Activated T-helper 2 cell treated with anti-CD3 and anti-CD28 coated beads, Interferon-gamma antibody, Interleukin-2, Interleukin-4, amounts not matched to agents 10 μg/mL and 5 μg/mL and 100 μg/mL, durations not matched to agents 14 hours and 24 hours and 36 hours (primary cell): ENCODE measurements at regions of chr2 and their contacts with region 1.

Region 1: GRCh38 chr2:197145471-197146138 is 165.0 kb downstream of the ANKRD44 start:
- DNase-seq: no peak
- H3K4me3 Mint-ChIP-seq: no peak overlapping the region
- H3K27ac Mint-ChIP-seq: peak overlapping the region; percentile 80
- H3K4me1 Mint-ChIP-seq: peaks cover 58% of the 10 kb centered on the region
- H3K27me3 Mint-ChIP-seq: no peaks in the 10 kb centered on the region

Region 2: DNA sequence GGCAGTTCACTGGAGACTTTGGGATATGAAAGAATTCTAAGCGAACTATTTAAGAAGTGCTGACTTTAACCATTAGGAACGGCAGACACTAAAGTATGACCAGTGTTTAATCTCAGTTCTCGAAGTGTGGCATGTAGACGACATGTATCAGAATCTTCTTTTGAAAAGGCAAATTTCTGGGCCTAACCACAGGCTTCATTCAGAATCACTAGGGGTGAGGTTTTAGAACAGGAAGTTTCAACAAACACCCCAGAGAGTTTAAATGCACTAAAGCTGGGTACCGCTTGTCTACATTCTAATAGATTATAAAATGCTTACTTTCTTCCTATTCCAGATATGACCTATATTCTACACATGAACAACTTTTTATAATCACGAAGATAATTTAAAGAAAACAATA is 15.3 kb before region 1 on chr2:
- intact Hi-C with region 1: loop called (anchors 2 kb)
- DNase-seq: no peak
- H3K4me3 Mint-ChIP-seq: peak overlapping the region; percentile 11
- H3K27ac Mint-ChIP-seq: peak overlapping the region; percentile 86
- H3K4me1 Mint-ChIP-seq: peaks cover 63% of the 10 kb centered on the region
- H3K27me3 Mint-ChIP-seq: no peaks in the 10 kb centered on the region